GM12878 (cell line): ENCODE measurements at regions of chr16 and their contacts with region 1.

Region 1: DNA sequence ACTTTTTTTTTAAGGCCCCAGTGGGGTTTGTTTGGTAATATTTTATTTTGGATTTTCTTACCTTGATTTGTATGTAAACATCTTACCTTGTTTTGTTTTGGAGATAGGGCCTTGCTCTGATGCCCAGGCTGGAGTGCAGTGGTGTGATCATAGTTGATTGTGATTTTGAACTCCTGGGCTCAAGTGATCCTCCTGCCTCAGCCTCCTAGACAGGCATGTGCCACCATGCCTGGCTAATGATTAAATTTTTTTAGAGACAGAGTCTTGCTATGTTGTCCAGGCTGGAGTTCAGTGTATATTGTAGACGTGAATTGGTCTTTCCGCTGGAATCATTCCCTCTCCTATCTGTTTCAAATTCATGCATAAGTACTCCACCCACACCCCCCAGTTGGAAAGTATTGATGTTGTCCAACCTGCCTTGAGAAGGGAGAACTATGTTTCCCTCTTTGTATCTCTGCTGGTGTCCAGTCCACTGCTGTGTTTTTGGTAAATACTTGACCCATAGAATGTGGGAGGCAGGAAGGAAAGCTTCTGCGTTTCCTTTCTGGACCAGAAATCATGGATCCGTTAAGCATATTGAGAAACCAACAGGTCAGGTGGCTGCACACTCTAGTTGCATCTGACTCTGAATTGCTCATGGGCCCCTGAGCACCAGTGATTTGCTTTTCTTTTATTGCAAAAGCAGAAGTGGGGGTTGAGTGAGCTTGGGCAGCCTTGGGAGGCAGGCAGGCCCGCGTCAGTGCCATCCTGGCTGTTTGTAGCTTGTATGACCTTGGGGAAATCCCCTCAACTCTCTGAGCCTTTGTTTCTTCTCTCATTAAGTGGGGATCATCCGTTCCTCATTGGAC is 25.0 kb downstream of the RMI2 start:
- DNase-seq: peak; percentile 57
- ATAC-seq: peak; percentile 93
- H3K4me3 ChIP-seq: no peak overlapping the region
- H3K27ac ChIP-seq: no peak overlapping the region
- H3K4me1 ChIP-seq: peaks cover 15% of the 10 kb centered on the region
- H3K27me3 ChIP-seq: no peaks in the 10 kb centered on the region
- CTCF ChIP-seq: no peak
- EP300 ChIP-seq: no peak
- POLR2A ChIP-seq: no peak
- RAD21 ChIP-seq: no peak

Region 2: GRCh38 chr16:10971560-10971961 is 398.7 kb before region 1 on chr16:
- CTCF ChIA-PET with region 1: interaction called, 10 read pairs
- POLR2A ChIA-PET with region 1: no interaction called
- RAD21 ChIA-PET with region 1: interaction called, 7 read pairs
- SMC1A ChIA-PET with region 1: interaction called, 5 read pairs
- in situ Hi-C with region 1: no loop called
- intact Hi-C with region 1: no loop called
- DNase-seq: no peak
- ATAC-seq: peak; percentile 68
- H3K4me3 ChIP-seq: no peak overlapping the region
- H3K27ac ChIP-seq: no peak overlapping the region
- H3K4me1 ChIP-seq: peaks cover 4% of the 10 kb centered on the region
- H3K27me3 ChIP-seq: no peaks in the 10 kb centered on the region
- CTCF ChIP-seq: peak; percentile 48 to 83 (median 68)
- EP300 ChIP-seq: no peak
- POLR2A ChIP-seq: no peak
- RAD21 ChIP-seq: peak; percentile 82

Region 3: DNA sequence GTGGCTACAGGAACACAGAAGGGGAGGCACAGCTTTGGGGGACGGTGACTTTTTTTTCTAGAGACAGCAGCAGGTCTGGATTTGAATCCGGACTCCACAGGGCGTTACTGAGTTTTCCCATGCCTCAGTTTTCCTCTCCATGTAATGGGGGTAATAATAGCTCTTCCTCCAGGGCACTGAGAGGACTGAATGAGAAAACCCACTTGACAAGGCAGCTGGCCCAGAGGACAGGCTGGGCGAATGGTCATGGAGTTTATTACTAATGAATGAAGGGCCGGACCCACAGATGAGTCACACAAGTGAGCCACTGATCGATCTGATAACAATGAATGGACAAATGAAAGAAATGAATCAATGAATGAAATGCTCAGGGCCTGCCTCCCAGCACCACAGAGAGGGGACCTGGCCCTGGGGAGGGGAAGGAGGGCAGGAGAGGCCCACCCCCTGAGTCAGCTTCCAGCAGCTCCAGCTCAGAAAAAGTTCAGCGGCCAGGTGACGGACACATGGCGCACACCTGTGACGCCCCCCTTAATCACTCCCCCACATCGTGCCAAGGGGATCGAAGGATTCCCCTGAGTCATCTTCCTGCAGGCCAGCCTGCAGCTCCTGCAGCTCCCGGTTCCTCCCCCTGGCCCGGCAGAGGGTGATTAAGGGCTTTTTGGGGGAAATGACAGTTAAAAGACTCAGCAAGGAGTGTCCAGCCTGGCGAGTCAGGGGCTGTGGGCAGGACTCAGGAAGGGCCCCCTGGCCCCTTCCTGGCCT is 168.6 kb before region 1 on chr16:
- CTCF ChIA-PET with region 1: interaction called, 6 read pairs
- POLR2A ChIA-PET with region 1: interaction called, 14 read pairs
- RAD21 ChIA-PET with region 1: interaction called, 4 read pairs
- SMC1A ChIA-PET with region 1: interaction called, 3 read pairs
- in situ Hi-C with region 1: no loop called
- intact Hi-C with region 1: no loop called
- DNase-seq: no peak
- ATAC-seq: peak; percentile 5
- H3K4me3 ChIP-seq: no peak overlapping the region
- H3K27ac ChIP-seq: peak overlapping the region; percentile 45
- H3K4me1 ChIP-seq: peaks cover 67% of the 10 kb centered on the region
- H3K27me3 ChIP-seq: no peaks in the 10 kb centered on the region
- CTCF ChIP-seq: no peak
- EP300 ChIP-seq: peak in 1 of 2 experiments; percentile 28; a peak in 1 of 4 replicates
- POLR2A ChIP-seq: no peak
- RAD21 ChIP-seq: no peak

Region 4: GRCh38 chr16:11263737-11264136 is 106.6 kb before region 1 on chr16:
- CTCF ChIA-PET with region 1: interaction called, 32 read pairs
- POLR2A ChIA-PET with region 1: interaction called, 13 read pairs
- RAD21 ChIA-PET with region 1: interaction called, 15 read pairs
- SMC1A ChIA-PET with region 1: interaction called, 4 read pairs
- in situ Hi-C with region 1: no loop called
- intact Hi-C with region 1: no loop called
- DNase-seq: no peak
- ATAC-seq: peak; percentile 69
- H3K4me3 ChIP-seq: no peak overlapping the region
- H3K27ac ChIP-seq: peak overlapping the region; percentile 45
- H3K4me1 ChIP-seq: peaks cover 25% of the 10 kb centered on the region
- H3K27me3 ChIP-seq: no peaks in the 10 kb centered on the region
- CTCF ChIP-seq: no peak
- EP300 ChIP-seq: 0 out of 4 replicates have a peak, but pooled peaks of 1 of the 2 experiments have one; percentile 8
- POLR2A ChIP-seq: no peak
- RAD21 ChIP-seq: no peak

Region 5: GRCh38 chr16:11339075-11339474 is 31.2 kb before region 1 on chr16:
- CTCF ChIA-PET with region 1: no interaction called
- POLR2A ChIA-PET with region 1: no interaction called
- RAD21 ChIA-PET with region 1: no interaction called
- SMC1A ChIA-PET with region 1: no interaction called
- in situ Hi-C with region 1: no loop called
- intact Hi-C with region 1: no loop called
- DNase-seq: no peak
- ATAC-seq: no peak; the same call in 2 of the 3 replicates
- H3K4me3 ChIP-seq: no peak overlapping the region
- H3K27ac ChIP-seq: no peak overlapping the region
- H3K4me1 ChIP-seq: no peaks in the 10 kb centered on the region
- H3K27me3 ChIP-seq: no peaks in the 10 kb centered on the region
- CTCF ChIP-seq: no peak
- EP300 ChIP-seq: no peak
- POLR2A ChIP-seq: no peak
- RAD21 ChIP-seq: no peak

Region 6: GRCh38 chr16:11386791-11387546 is 16.7 kb after region 1 on chr16:
- CTCF ChIA-PET with region 1: interaction called, 16 read pairs
- POLR2A ChIA-PET with region 1: interaction called, 10 read pairs
- RAD21 ChIA-PET with region 1: interaction called, 17 read pairs
- SMC1A ChIA-PET with region 1: interaction called, 8 read pairs
- in situ Hi-C with region 1: no loop called
- intact Hi-C with region 1: no loop called
- DNase-seq: no peak
- ATAC-seq: peak; percentile 90
- H3K4me3 ChIP-seq: no peak overlapping the region
- H3K27ac ChIP-seq: no peak overlapping the region
- H3K4me1 ChIP-seq: peaks cover 11% of the 10 kb centered on the region
- H3K27me3 ChIP-seq: no peaks in the 10 kb centered on the region
- CTCF ChIP-seq: peak; percentile 47 to 77 (median 65)
- EP300 ChIP-seq: no peak
- POLR2A ChIP-seq: no peak
- RAD21 ChIP-seq: no peak

Region 7: DNA sequence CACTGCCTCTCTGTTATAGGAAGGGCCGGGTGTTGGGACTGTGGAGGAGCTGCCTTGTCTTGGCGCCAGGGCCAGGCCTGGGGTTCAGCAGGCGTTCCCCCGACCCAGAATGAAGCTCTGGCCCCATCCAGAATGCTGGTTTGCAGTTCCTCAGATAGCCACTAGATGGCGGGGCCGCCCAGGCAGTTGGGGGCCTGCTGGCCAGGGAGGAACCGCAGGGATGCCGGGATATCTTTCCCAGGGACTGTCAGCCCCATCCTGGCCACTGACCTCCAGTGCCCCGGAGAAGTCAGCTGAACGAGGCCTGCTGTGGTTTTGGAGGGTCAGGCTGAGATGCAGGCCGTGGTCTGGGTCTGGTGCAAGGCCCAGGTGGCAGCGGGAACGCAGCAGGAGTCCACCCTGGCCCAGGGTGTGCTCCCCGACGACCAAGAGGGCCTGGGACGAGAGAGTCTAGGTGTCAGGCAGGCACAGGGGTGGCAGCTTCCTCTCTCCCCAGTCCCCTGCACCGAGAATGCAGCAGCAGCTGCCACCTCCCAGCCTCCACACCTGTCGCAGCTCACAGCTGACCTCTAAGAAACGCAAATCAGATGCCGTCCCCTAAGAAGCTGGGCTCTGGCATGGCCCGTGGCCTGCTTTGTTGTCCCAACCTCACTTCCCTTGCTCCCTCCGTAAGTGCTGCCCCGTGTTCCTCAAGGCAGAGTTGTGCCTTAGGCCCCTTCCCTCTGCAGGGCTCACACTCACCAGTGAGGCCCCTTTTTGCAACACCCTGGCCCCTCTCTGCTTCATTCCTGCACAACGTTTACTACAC is 26.1 kb after region 1 on chr16:
- CTCF ChIA-PET with region 1: interaction called, 14 read pairs
- POLR2A ChIA-PET with region 1: no interaction called
- RAD21 ChIA-PET with region 1: interaction called, 3 read pairs
- SMC1A ChIA-PET with region 1: no interaction called
- in situ Hi-C with region 1: no loop called
- intact Hi-C with region 1: no loop called
- DNase-seq: no peak
- ATAC-seq: peak; percentile 90
- H3K4me3 ChIP-seq: no peak overlapping the region
- H3K27ac ChIP-seq: no peak overlapping the region
- H3K4me1 ChIP-seq: no peaks in the 10 kb centered on the region
- H3K27me3 ChIP-seq: no peaks in the 10 kb centered on the region; a peak in 1 of 4 replicates
- CTCF ChIP-seq: peak; percentile 97 to 98 (median 97); a peak in 5 of 6 replicates
- EP300 ChIP-seq: no peak
- POLR2A ChIP-seq: no peak
- RAD21 ChIP-seq: peak; percentile 97